CD14-positive monocyte (primary cell): ENCODE measurements at regions of chr16 and their contacts with region 1.

Region 1: GRCh38 chr16:527006-527753 is at the start of gene CAPN15:
- DNase-seq: peak; percentile 78 to 83 (median 81)
- H3K4me3 ChIP-seq: peak within 1 kb of the TSS; percentile 52 to 91 (median 76)
- H3K4me3 Mint-ChIP-seq: peak within 1 kb of the TSS; percentile 88 to 92
- H3K27ac ChIP-seq: peak within 1 kb of the TSS; percentile 60 to 92
- H3K27ac Mint-ChIP-seq: peak within 1 kb of the TSS; percentile 83 to 94 (median 86)
- H3K4me1 ChIP-seq: peaks cover 29 to 43% of the 10 kb centered on the region in 2 donors
- H3K4me1 Mint-ChIP-seq: peaks cover 39% of the 10 kb centered on the region
- H3K27me3 ChIP-seq: no peaks in the 10 kb centered on the region
- H3K27me3 Mint-ChIP-seq: peaks cover 0 to 2% (median 1%) of the 10 kb centered on the region in 3 donors
- CTCF ChIP-seq: no peak
- polyA plus RNA-seq, gene CAPN15: 3.4 to 42.6 (median 3.9) TPM

Region 2: GRCh38 chr16:303760-304505 is 223.2 kb before region 1 on chr16:
- intact Hi-C with region 1: no loop called
- DNase-seq: peak; percentile 33 to 43 (median 41)
- H3K4me3 ChIP-seq: no peak overlapping the region
- H3K4me3 Mint-ChIP-seq: no peak overlapping the region
- H3K27ac ChIP-seq: no peak overlapping the region
- H3K27ac Mint-ChIP-seq: peak overlapping the region in 6 of 7 donors; percentile 34 to 74 (median 55)
- H3K4me1 ChIP-seq: no peaks in the 10 kb centered on the region
- H3K4me1 Mint-ChIP-seq: no peaks in the 10 kb centered on the region
- H3K27me3 ChIP-seq: no peaks in the 10 kb centered on the region
- H3K27me3 Mint-ChIP-seq: peaks cover 0 to 1% (median 0%) of the 10 kb centered on the region in 3 donors
- CTCF ChIP-seq: peak; percentile 22

Region 3: DNA sequence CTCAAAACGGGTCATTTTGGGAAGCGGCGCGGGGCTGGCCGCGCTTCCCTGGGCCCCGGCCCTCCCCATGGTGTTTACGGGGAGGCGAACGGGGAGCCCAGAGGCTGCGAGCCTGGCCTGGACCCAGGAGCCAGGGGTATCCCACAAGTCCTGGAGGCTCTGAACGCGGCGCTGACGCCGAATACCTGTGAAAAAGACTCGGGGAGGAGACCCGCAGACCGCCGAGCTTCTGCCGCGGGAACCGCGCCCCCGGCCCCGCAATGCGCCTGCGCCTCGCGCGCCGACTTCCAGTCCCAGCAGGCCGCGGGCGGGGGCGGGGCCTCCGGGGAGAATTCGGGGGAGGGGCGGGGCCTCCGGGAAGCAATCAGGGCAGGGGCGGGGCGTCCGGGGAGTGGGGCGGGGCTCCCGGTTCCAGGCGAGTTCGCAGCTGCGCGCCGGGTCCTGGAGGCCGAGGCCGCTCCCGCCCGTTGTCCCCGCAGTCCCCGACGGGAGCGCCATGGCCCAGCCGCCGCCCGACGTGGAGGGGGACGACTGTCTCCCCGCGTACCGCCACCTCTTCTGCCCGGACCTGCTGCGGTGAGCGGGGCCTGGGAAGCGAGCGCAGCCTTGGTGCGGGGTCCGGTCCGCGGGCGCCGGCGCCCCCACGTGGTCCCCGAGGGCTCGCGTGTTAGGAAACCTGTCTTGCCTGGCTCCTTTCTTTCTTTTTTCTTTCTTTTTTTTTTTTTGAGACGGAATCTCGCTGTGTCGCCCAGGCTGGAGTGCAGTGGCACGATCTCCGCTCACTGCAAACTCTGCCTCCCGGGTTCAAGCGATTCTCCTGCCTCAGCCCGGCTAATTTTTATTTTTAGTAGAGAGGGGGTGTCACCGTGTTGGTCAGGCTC is 125.5 kb before region 1 on chr16 and contains the start of gene DECR2:
- intact Hi-C with region 1: loop called (anchors 5 kb)
- DNase-seq: peak; percentile 81 to 88 (median 83)
- H3K4me3 ChIP-seq: peak within 1 kb of the TSS; percentile 86 to 97 (median 92)
- H3K4me3 Mint-ChIP-seq: peak within 1 kb of the TSS; percentile 93 to 97
- H3K27ac ChIP-seq: peak within 1 kb of the TSS; percentile 78 to 85
- H3K27ac Mint-ChIP-seq: peak within 1 kb of the TSS; percentile 90 to 98 (median 97)
- H3K4me1 ChIP-seq: peaks cover 25 to 32% of the 10 kb centered on the region in 2 donors
- H3K4me1 Mint-ChIP-seq: peaks cover 24% of the 10 kb centered on the region
- H3K27me3 ChIP-seq: no peaks in the 10 kb centered on the region
- H3K27me3 Mint-ChIP-seq: peaks cover under 1% of the 10 kb centered on the region in 3 donors
- CTCF ChIP-seq: peak; percentile 59
- polyA plus RNA-seq, gene DECR2: 5.7 to 12.8 (median 8.7) TPM

Region 4: GRCh38 chr16:589658-590159 is 62.5 kb after region 1 on chr16 and contains the start of gene RAB40C:
- intact Hi-C with region 1: loop called in 1 of 2 experiments (anchors 2 kb)
- DNase-seq: peak; percentile 96 to 100 (median 99)
- H3K4me3 ChIP-seq: peak within 1 kb of the TSS; percentile 85 to 92 (median 86)
- H3K4me3 Mint-ChIP-seq: peak within 1 kb of the TSS; percentile 91 to 99
- H3K27ac ChIP-seq: peak within 1 kb of the TSS; percentile 86 to 91
- H3K27ac Mint-ChIP-seq: peak within 1 kb of the TSS; percentile 98 to 100 (median 99)
- H3K4me1 ChIP-seq: peaks cover 58 to 63% of the 10 kb centered on the region in 2 donors
- H3K4me1 Mint-ChIP-seq: peaks cover 54% of the 10 kb centered on the region
- H3K27me3 ChIP-seq: peaks cover 0 to 7% of the 10 kb centered on the region in 2 donors
- H3K27me3 Mint-ChIP-seq: peaks cover 3 to 15% (median 12%) of the 10 kb centered on the region in 3 donors
- CTCF ChIP-seq: no peak
- polyA plus RNA-seq, gene RAB40C: 10.0 to 22.6 (median 10.9) TPM